ENCODE measurements at regions of chr1 and their contacts with region 1.

Region 1: GRCh38 chr1:169928438-169929209 is 34.9 kb upstream of the SCYL3 start:
- DNase-seq: no peak

Region 2: GRCh38 chr1:169874229-169874628 is 54.4 kb before region 1 on chr1:
- intact Hi-C with region 1: no loop called
- DNase-seq: no peak

Region 3: DNA sequence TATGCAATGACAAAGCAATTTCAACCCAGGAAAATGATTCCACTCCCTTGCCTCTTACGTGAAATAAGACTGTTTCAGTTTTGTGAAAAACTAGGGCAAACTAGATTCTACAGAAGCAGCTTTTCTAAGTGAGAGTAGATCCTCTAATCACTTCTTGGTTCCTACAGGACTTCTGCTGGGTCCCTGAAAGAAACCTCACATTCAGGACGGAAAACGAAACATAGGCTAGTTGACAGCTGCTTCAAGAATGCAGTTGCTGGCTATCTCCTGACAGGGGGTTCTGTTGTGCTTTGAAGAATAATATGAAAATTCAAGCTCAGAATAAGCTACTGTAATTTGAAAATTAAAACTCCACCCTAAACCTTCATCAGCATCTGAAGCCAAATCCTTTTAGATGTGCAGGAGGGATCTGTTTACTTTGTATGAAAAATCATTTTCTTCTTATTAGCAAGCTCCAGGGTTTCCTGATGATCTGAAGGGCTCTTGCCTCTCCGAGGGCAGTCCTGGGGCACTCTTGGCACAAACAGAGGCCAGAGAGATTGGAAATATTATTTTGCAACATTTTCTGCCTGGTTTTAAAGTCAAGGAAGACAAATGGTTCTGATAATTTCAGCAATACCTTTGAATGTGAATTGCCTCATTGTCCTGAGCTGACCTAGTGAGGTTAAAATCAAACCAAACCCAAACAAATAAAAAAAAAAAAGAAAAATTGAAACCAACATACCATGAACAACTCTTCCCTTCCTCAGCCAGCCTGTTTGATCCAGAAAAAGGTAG is 272.2 kb after region 1 on chr1:
- intact Hi-C with region 1: no loop called
- DNase-seq: no peak

Region 4: DNA sequence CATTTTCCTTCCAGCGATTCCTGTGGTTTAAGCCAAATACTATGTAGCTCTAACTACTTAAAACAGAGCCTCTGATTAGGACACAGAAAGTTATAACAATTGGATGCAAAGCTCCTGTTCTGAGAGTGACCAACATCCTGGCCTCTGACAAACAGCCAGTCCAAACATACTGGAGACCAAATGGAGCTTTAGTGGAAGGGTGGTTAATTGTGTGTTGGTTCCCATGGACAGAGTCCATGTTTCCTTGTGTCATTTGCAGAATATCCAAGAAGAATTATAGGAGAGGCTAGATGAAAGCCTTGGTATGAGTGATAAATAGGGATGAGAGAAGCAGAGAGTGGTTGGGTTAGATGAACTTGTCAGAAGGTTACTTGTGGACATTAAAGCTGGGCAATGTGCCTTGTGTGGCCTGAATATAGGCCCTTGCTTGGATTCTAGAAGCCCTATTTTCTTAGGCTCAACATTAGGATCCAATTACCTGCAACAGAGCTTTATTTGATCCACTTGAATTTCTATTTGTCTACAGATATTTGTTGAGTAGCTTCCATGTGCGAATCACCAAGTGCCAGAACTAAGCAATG is 422.8 kb after region 1 on chr1:
- intact Hi-C with region 1: loop called in 1 of 2 experiments (anchors 10 kb)
- DNase-seq: no peak

Region 5: GRCh38 chr1:170765712-170766330 is 837.2 kb after region 1 on chr1:
- intact Hi-C with region 1: loop called in 1 of 2 experiments (anchors 10 kb)
- DNase-seq: no peak